HCT116 (cell line): ENCODE measurements at regions of chr9 and their contacts with region 1.

Region 1: GRCh38 chr9:121213136-121213806 is 11.6 kb upstream of the RAB14 start:
- DNase-seq: peak; percentile 77
- ATAC-seq: peak; percentile 98
- H3K4me3 ChIP-seq: no peak overlapping the region
- H3K27ac ChIP-seq: no peak overlapping the region
- H3K4me1 ChIP-seq: peaks cover 0 to 8% of the 10 kb centered on the region in 2 experiments; a peak in 2 of 4 replicates
- H3K27me3 ChIP-seq: no peaks in the 10 kb centered on the region
- CTCF ChIP-seq: peak; percentile 94 to 96 (median 94)
- POLR2A ChIP-seq: no peak
- RAD21 ChIP-seq: peak; percentile 99

Region 2: GRCh38 chr9:121150188-121150587 is 63.1 kb before region 1 on chr9:
- CTCF ChIA-PET with region 1: no interaction called
- POLR2A ChIA-PET with region 1: no interaction called
- RAD21 ChIA-PET with region 1: no interaction called
- intact Hi-C with region 1: no loop called
- DNase-seq: no peak
- ATAC-seq: no peak
- H3K4me3 ChIP-seq: no peak overlapping the region
- H3K27ac ChIP-seq: no peak overlapping the region
- H3K4me1 ChIP-seq: peaks cover 6 to 19% of the 10 kb centered on the region in 2 experiments; a peak in 3 of 4 replicates
- H3K27me3 ChIP-seq: no peaks in the 10 kb centered on the region
- CTCF ChIP-seq: no peak
- POLR2A ChIP-seq: no peak
- RAD21 ChIP-seq: no peak

Region 3: GRCh38 chr9:121278535-121279261 is 65.4 kb after region 1 on chr9:
- CTCF ChIA-PET with region 1: interaction called, 13 read pairs
- POLR2A ChIA-PET with region 1: no interaction called
- RAD21 ChIA-PET with region 1: interaction called, 3 to 7 read pairs
- intact Hi-C with region 1: loop called (anchors 5 kb)
- DNase-seq: peak; percentile 59
- ATAC-seq: peak; percentile 68
- H3K4me3 ChIP-seq: peak overlapping the region; percentile 0 to 43; a peak in 2 of 4 replicates
- H3K27ac ChIP-seq: peak overlapping the region; percentile 56
- H3K4me1 ChIP-seq: peaks cover 61 to 74% of the 10 kb centered on the region in 2 experiments
- H3K27me3 ChIP-seq: no peaks in the 10 kb centered on the region
- CTCF ChIP-seq: peak in 2 of 3 experiments; percentile 84 to 89; a peak in 4 of 6 replicates
- POLR2A ChIP-seq: no peak
- RAD21 ChIP-seq: no peak

Region 4: DNA sequence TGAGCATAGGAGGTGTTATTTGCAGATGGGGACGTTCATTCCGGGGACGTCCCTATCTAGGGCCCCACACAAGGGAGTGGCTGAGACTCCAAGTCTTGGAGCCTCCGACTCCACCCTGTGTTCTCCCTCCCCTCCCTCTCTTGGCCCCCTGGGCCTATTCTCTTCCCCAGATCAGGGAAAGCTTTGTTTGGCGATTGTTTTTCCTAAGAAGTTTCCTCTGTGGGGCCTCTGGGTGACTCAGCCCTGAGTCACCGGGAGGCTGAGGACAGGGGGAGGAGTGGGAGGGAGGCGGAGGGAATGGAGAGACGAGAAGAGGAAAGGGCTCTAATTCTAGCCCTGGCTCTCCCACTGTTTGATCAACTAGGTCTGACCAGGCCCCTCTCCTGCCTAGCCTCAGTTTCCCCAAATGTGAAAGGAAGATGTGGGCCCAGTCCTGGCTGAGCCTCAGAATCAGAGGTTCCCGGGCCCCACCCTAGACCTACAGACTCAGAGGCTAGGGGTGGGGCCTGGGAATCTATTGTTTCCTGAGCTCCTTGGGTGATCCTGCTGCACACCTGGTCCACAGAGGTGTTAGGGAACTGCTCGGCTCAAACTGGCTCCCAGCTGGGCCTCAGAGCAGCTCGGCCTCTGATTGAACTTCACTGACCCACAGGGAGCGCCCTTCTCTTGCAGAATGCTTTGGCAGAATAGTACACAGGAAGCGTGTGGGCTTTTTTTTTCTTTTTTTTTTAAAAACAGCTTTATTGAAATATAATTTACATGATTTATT is 73.9 kb after region 1 on chr9:
- CTCF ChIA-PET with region 1: interaction called, 17 read pairs
- POLR2A ChIA-PET with region 1: interaction called, 3 read pairs
- RAD21 ChIA-PET with region 1: no interaction called
- intact Hi-C with region 1: loop called (anchors 5 kb)
- DNase-seq: peak; percentile 98
- ATAC-seq: peak; percentile 86
- H3K4me3 ChIP-seq: peak overlapping the region; percentile 39 to 52
- H3K27ac ChIP-seq: peak overlapping the region; percentile 99
- H3K4me1 ChIP-seq: peaks cover 77 to 81% of the 10 kb centered on the region in 2 experiments
- H3K27me3 ChIP-seq: no peaks in the 10 kb centered on the region
- CTCF ChIP-seq: peak in 2 of 3 experiments; percentile 39 to 45; a peak in 4 of 6 replicates
- POLR2A ChIP-seq: peak; percentile 11
- RAD21 ChIP-seq: no peak

Region 5: GRCh38 chr9:121376214-121376830 is 163.1 kb after region 1 on chr9:
- CTCF ChIA-PET with region 1: interaction called, 17 read pairs
- POLR2A ChIA-PET with region 1: no interaction called
- RAD21 ChIA-PET with region 1: no interaction called
- intact Hi-C with region 1: loop called (anchors 1 kb)
- DNase-seq: no peak
- ATAC-seq: no peak
- H3K4me3 ChIP-seq: no peak overlapping the region
- H3K27ac ChIP-seq: no peak overlapping the region
- H3K4me1 ChIP-seq: no peaks in the 10 kb centered on the region
- H3K27me3 ChIP-seq: no peaks in the 10 kb centered on the region
- CTCF ChIP-seq: peak; percentile 19 to 93 (median 54); a peak in 5 of 6 replicates
- POLR2A ChIP-seq: no peak
- RAD21 ChIP-seq: peak; percentile 78

Region 6: DNA sequence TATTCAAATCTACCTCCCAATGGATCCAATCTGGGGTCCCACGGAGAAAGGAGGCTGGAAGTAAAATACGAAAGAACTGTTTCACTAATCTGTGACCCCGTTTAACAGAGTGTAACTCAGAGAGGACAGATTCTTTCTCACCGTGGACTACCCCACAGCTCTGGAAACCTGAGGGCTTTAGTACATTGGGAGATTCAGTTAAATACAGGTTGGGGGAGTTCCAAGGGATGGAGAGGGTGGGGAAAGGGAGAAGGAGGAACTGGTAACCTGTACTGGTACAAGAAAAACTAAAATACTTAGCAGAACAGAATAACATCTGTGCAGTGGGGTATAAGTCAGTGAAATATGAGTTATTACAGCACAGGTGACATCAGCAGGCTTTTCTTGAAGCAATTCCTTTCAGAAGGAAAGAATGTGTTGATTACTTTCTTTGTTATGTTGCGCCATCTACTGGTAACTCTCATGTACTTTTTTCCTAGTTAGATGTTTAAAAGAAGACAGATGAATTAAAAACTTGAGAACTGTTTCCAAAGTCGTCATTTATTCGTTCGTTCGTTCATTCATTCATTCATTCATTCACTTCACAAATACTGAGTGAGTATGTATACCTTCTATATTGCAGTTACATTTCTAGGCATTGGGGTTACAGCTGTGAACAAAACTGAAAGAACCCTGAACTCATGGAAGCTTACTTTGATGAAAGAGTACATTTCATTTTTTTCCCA is 186.8 kb after region 1 on chr9:
- CTCF ChIA-PET with region 1: interaction called, 28 read pairs
- POLR2A ChIA-PET with region 1: no interaction called
- RAD21 ChIA-PET with region 1: interaction called in 1 of 2 experiments, 5 read pairs
- intact Hi-C with region 1: loop called (anchors 1 kb)
- DNase-seq: peak; percentile 74
- ATAC-seq: peak; percentile 84
- H3K4me3 ChIP-seq: no peak overlapping the region
- H3K27ac ChIP-seq: no peak overlapping the region
- H3K4me1 ChIP-seq: peaks cover 0 to 3% of the 10 kb centered on the region in 2 experiments; a peak in 1 of 4 replicates
- H3K27me3 ChIP-seq: no peaks in the 10 kb centered on the region
- CTCF ChIP-seq: peak; percentile 41 to 93 (median 73)
- POLR2A ChIP-seq: no peak
- RAD21 ChIP-seq: peak; percentile 91

Region 7: GRCh38 chr9:121538246-121538645 is 325.0 kb after region 1 on chr9:
- CTCF ChIA-PET with region 1: interaction called, 4 read pairs
- POLR2A ChIA-PET with region 1: no interaction called
- RAD21 ChIA-PET with region 1: no interaction called
- intact Hi-C with region 1: loop called (anchors 5 kb)
- DNase-seq: peak; percentile 48
- ATAC-seq: peak; percentile 97
- H3K4me3 ChIP-seq: no peak overlapping the region
- H3K27ac ChIP-seq: no peak overlapping the region
- H3K4me1 ChIP-seq: no peaks in the 10 kb centered on the region; a peak in 1 of 4 replicates
- H3K27me3 ChIP-seq: no peaks in the 10 kb centered on the region
- CTCF ChIP-seq: peak; percentile 37 to 73 (median 47); a peak in 5 of 6 replicates
- POLR2A ChIP-seq: no peak
- RAD21 ChIP-seq: peak; percentile 84